Heart left ventricle (tissue), 16 donors: ENCODE measurements at regions of chr16 and their contacts with region 1.

Region 1: GRCh38 chr16:50381679-50382440 is 13.1 kb upstream of the BRD7 start:
- DNase-seq: no peak
- ATAC-seq: no peak
- H3K4me3 ChIP-seq: no peak overlapping the region
- H3K27ac ChIP-seq: no peak overlapping the region
- H3K4me1 ChIP-seq: no peaks in the 10 kb centered on the region
- H3K27me3 ChIP-seq: peaks cover 0 to 8% (median 0%) of the 10 kb centered on the region in 9 donors
- CTCF ChIP-seq: no peak
- POLR2A ChIP-seq: no peak

Region 2: DNA sequence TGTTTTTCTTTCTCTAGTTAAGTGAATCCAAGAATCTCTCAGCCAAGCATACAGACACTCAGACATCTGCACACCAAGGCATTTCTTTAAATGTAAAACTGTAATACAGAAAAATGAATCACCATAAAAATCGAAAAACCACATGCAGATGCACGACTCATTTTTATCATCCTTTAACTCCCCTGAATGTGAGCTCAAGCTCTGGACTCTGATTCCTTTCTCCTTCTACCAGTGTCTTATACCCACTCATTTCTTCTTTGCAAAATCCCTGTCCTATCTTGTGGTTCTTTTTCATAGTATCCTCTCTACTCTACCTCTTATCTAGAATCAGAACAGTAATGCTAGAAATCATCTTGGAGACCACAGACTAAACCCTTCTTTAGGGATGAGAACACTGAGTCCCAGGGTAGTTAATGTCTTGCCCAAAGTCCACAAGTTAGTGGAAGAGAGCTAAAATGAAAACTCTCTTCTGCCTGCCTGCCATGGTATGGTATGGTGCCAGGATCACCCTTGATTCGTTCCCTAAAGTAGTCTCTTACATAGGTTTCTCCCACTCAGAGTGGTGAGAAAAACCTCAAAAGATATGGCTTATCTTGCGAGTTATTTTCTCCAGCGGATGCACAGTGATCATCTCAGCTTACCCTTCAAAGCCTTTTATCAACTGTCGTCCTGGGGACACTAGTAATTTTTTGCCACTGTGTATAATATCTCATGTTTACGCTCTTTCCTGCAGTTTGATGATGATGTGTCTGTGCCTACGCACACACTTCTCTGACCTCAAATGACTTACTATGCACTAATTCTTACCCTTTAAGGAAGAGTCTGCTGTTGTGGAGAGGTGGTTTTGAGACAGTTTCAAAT is 43.3 kb before region 1 on chr16:
- intact Hi-C with region 1: no loop called
- DNase-seq: no peak
- ATAC-seq: no peak
- H3K4me3 ChIP-seq: no peak overlapping the region
- H3K27ac ChIP-seq: peak overlapping the region in 1 of 12 donors; percentile 29
- H3K4me1 ChIP-seq: peaks cover 0 to 12% (median 0%) of the 10 kb centered on the region in 12 donors
- H3K27me3 ChIP-seq: no peaks in the 10 kb centered on the region
- CTCF ChIP-seq: no peak
- POLR2A ChIP-seq: no peak

Region 3: GRCh38 chr16:50644729-50645128 is 262.9 kb after region 1 on chr16:
- intact Hi-C with region 1: loop called in 2 of 10 experiments (anchors 5 to 10 kb)
- DNase-seq: no peak
- ATAC-seq: peak in 3 of 4 donors; percentile 61 to 74 (median 71)
- H3K4me3 ChIP-seq: no peak overlapping the region
- H3K27ac ChIP-seq: no peak overlapping the region
- H3K4me1 ChIP-seq: peaks cover 0 to 5% (median 0%) of the 10 kb centered on the region in 12 donors
- H3K27me3 ChIP-seq: no peaks in the 10 kb centered on the region
- CTCF ChIP-seq: peak in 11 of 12 donors; percentile 11 to 58 (median 37)
- POLR2A ChIP-seq: no peak